ENCODE measurements at regions of chr10 and their contacts with region 1.

Region 1: GRCh38 chr10:30783939-30784500 is 154.5 kb upstream of the LYZL2 start:
- DNase-seq: peak; percentile 88
- CTCF ChIP-seq: peak; percentile 92

Region 2: DNA sequence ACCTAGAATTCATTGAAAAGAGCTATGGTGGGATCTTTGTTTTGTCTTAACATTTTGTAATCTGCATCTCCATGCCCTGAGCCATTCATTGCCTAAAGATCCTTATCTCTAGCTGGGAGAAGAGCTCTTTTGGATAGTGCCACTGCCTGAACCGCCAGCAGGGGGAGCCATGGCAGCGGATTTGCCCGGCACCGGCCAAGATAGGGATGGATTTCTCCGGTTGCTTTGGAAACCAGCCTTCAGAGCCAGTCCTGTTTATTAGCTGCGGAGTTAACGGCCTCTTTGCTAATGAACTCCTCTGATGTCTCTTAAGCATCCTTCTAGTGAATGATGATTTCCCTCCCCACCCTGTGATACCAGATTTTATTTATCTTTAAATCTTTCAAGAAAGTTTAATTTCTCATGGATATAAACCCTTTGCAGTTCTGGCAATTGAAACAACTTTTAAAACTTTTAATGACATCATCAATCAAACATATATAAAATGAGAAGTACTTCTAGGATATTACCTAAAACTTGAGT is 96.3 kb before region 1 on chr10:
- CTCF ChIA-PET with region 1: interaction called, 11 read pairs
- POLR2A ChIA-PET with region 1: no interaction called
- DNase-seq: peak; percentile 65
- CTCF ChIP-seq: peak; percentile 87

Region 3: GRCh38 chr10:30751678-30752331 is 32.2 kb before region 1 on chr10:
- CTCF ChIA-PET with region 1: interaction called, 19 read pairs
- POLR2A ChIA-PET with region 1: no interaction called
- DNase-seq: peak; percentile 61
- CTCF ChIP-seq: peak; percentile 72

Region 4: GRCh38 chr10:30769361-30769760 is 14.7 kb before region 1 on chr10:
- CTCF ChIA-PET with region 1: interaction called, 39 read pairs
- POLR2A ChIA-PET with region 1: no interaction called
- DNase-seq: no peak
- CTCF ChIP-seq: no peak

Region 5: GRCh38 chr10:30818010-30818531 is 34.1 kb after region 1 on chr10:
- CTCF ChIA-PET with region 1: interaction called, 12 read pairs
- POLR2A ChIA-PET with region 1: no interaction called
- DNase-seq: no peak
- CTCF ChIP-seq: no peak

Region 6: DNA sequence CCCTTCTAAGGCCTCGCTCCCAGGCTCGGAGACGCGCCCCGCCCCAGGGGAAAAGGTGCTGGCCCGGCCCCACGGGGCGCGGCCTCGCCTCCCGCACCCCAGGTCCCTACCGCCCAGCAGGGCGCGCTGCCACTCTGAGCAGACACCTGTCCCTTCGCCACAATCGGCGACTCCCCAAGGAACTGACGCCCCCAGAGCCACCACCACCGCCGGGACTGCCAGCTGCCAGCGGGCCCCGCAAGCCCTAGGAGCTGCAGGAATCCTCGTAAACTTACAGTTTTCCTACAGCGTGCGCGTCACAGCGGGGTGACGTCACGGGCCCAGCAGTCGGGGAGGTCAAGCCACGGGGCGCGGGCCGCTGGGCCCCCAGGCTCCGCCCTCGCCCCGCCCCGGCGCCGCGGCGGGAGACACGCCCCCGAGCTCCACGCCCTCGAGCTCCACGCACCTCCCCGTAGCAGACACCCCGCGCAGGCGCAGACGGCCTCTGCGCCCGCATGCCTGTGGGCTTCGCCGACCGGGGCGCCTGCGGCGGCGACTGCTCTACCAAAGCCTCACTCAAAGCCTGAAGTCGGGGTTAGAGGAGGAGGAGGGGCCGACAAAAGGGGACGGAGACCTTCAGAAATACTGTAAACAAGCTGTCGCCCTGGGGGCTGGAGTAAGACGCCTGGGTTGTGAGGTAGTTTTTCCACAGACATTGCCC is 247.7 kb after region 1 on chr10 and contains the start of gene ZNF438:
- CTCF ChIA-PET with region 1: interaction called, 12 read pairs
- POLR2A ChIA-PET with region 1: no interaction called
- DNase-seq: peak; percentile 99
- CTCF ChIP-seq: peak; percentile 76

Region 7: DNA sequence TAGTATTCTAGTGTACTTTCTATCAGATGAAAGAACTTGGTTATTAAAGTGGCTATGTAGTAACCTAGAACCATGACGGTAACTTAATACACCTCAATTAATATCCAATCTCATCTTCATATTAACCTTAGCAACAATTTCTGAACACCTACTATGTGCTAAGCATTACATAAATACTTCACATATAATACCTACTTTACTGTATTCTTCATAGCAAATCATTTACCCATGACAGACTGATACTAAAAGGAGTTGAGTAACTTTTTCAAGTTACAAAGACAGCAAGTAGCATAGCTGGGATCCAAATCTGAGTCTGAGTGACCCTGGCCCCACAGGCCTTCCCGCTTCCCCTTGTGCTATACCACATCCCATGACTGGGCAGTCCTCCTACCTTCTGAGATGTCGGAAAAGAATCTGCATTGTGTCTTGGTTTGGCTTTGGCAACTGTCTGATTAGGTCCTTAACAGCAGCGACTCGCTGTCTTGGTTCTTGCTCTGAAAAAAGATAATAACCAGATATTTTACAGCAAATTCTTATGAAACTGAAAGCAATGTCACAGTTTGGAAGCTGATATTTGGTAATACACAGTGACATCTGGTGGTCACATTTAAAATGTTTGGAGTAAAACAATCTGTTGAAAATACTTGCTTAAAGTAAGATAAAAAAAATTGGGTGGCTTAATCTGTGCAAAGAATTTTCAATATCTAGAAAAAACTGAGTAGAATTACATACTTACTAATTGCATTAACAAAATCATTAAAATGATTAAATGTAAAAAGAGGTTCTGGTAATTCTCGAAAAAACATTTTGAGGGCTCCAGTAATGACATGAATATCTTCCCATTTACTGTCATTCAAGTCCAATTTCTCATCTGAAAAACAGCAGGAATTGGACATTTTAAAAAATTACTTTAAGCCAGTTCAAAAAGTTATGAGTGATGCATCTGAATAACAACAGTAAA is 1024.5 kb after region 1 on chr10:
- CTCF ChIA-PET with region 1: interaction called, 22 read pairs
- POLR2A ChIA-PET with region 1: no interaction called
- DNase-seq: peak; percentile 36
- CTCF ChIP-seq: peak; percentile 34